Gastrocnemius medialis (tissue), 4 donors: ENCODE measurements at regions of chr5 and their contacts with region 1.

Region 1: GRCh38 chr5:154654486-154655371 is 100.4 kb upstream of the LARP1 start:
- DNase-seq: no peak
- ATAC-seq: peak; percentile 20 to 30
- H3K4me3 ChIP-seq: no peak overlapping the region
- H3K27ac ChIP-seq: peak overlapping the region; percentile 18 to 45 (median 28)
- H3K4me1 ChIP-seq: peaks cover 7 to 14% of the 10 kb centered on the region in 2 donors
- H3K27me3 ChIP-seq: no peaks in the 10 kb centered on the region
- CTCF ChIP-seq: no peak
- POLR2A ChIP-seq: no peak

Region 2: DNA sequence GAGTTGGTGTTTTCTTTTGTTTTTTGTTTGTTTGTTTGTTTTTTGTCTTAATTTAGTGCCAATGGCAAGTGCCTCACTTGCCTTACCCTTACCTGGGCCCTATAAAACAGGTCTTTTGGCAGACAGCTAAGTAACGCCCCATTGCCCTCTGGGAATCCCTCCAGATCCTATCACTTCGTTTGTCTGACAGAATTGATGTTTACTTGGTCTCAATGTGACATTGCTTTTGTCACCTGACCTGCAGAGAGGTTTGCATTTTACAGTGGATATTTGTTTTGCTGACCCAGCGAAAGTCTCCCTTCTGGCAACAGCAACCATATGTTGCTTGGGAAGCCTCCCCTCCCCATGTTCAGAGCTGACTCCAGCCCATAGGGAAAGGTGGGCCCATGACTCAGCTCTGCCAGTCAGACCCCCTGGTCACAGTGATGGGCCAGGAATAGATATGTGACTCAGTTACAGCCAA is 46.4 kb after region 1 on chr5:
- in situ Hi-C with region 1: no loop called
- intact Hi-C with region 1: no loop called
- DNase-seq: no peak
- ATAC-seq: peak; percentile 30 to 57
- H3K4me3 ChIP-seq: no peak overlapping the region
- H3K27ac ChIP-seq: peak overlapping the region; percentile 73 to 82 (median 78)
- H3K4me1 ChIP-seq: peaks cover 8 to 15% of the 10 kb centered on the region in 2 donors
- H3K27me3 ChIP-seq: no peaks in the 10 kb centered on the region
- CTCF ChIP-seq: no peak
- POLR2A ChIP-seq: no peak

Region 3: DNA sequence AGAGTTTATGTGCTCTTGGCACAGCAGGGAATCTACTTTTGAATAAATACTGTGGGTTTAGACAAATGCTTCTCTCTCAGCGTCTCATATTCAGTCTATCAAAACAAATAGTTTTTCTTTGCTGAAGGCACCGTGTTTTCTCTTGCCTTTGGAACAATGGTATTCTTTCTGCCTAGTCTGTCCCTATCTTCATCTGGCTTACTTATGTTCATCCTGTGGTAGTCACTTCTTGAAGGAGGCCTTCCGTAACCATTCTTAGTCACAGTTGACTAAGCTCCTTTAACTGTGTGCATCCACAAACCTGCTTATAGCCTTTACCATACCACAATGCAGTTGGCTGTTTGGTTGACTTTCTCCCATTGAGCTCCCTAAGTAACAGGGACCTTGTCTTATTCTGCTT is 146.4 kb after region 1 on chr5:
- in situ Hi-C with region 1: loop called in 1 of 4 experiments (anchors 10 kb)
- intact Hi-C with region 1: no loop called
- DNase-seq: no peak
- ATAC-seq: no peak
- H3K4me3 ChIP-seq: no peak overlapping the region
- H3K27ac ChIP-seq: no peak overlapping the region
- H3K4me1 ChIP-seq: no peaks in the 10 kb centered on the region
- H3K27me3 ChIP-seq: no peaks in the 10 kb centered on the region
- CTCF ChIP-seq: no peak
- POLR2A ChIP-seq: no peak

Region 4: GRCh38 chr5:154811653-154812365 is 157.1 kb after region 1 on chr5:
- in situ Hi-C with region 1: loop called (anchors 5 to 10 kb)
- intact Hi-C with region 1: loop called (anchors 1 kb)
- DNase-seq: peak; percentile 24 to 53
- ATAC-seq: peak; percentile 49 to 72
- H3K4me3 ChIP-seq: no peak overlapping the region
- H3K27ac ChIP-seq: peak overlapping the region; percentile 2 to 29 (median 20)
- H3K4me1 ChIP-seq: no peaks in the 10 kb centered on the region
- H3K27me3 ChIP-seq: no peaks in the 10 kb centered on the region
- CTCF ChIP-seq: peak; percentile 84 to 93 (median 89)
- POLR2A ChIP-seq: no peak